Activated CD4-positive, alpha-beta T cell treated with anti-CD3 and anti-CD28 coated beads for 36 hours (primary cell): ENCODE measurements at regions of chr12 and their contacts with region 1.

Region 1: DNA sequence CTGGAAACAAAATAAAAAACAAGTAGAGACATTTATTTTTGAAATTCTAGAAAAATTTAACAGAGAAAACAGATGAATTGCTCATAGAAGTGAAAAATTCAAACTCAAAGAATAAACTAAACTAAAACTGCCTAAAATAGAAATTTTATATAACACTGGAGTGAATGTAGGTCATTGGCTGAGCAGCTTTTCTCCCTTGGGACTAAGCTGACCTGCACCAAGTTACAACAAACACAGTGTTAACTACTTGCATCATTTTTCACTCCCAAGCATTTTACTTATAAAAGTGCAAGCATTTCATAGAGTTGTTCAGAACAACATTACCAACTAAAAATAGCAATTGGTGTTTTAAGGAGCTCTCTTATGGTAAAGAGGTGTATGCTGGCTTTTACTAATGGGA is 298.1 kb downstream of the MED13L start:
- DNase-seq: no peak
- ATAC-seq: no peak
- H3K4me3 Mint-ChIP-seq: no peak overlapping the region
- H3K27ac Mint-ChIP-seq: no peak overlapping the region
- H3K4me1 Mint-ChIP-seq: no peaks in the 10 kb centered on the region
- H3K27me3 Mint-ChIP-seq: no peaks in the 10 kb centered on the region

Region 2: DNA sequence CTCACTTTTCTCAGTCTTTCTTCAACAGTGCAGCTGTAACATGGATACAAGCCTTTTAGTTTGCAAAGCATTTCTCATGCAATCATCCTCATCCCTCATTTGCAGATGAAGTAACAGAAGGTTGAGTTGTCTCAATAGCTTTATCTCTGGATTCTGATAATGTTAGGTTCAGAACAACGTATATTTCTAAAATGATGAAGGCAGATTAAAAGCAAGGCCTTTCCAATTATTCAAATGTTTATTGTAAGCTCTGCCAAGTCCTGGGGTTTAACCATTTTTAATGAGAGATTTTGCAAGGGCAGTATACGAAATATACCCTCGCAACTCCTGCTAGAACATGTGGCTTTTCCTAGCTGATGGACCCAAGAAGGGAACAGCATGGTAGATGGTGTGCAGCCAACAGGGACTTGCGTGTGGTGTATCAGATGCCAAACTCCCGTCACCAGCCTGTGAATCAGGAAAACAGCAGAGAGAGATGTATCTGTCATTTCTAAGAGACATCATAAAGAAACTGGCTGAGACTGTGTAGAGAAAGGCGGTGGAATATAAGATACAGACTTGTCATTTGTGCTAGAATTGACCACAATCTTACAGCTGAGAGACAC is 21.6 kb before region 1 on chr12:
- CTCF ChIA-PET with region 1: interaction called, 3 read pairs
- POLR2A ChIA-PET with region 1: no interaction called
- intact Hi-C with region 1: loop called in 1 of 2 experiments (anchors 2 kb)
- DNase-seq: no peak
- ATAC-seq: no peak
- H3K4me3 Mint-ChIP-seq: no peak overlapping the region
- H3K27ac Mint-ChIP-seq: no peak overlapping the region
- H3K4me1 Mint-ChIP-seq: no peaks in the 10 kb centered on the region
- H3K27me3 Mint-ChIP-seq: no peaks in the 10 kb centered on the region